MCF 10A (cell line): ENCODE measurements at regions of chr20 and their contacts with region 1.

Region 1: DNA sequence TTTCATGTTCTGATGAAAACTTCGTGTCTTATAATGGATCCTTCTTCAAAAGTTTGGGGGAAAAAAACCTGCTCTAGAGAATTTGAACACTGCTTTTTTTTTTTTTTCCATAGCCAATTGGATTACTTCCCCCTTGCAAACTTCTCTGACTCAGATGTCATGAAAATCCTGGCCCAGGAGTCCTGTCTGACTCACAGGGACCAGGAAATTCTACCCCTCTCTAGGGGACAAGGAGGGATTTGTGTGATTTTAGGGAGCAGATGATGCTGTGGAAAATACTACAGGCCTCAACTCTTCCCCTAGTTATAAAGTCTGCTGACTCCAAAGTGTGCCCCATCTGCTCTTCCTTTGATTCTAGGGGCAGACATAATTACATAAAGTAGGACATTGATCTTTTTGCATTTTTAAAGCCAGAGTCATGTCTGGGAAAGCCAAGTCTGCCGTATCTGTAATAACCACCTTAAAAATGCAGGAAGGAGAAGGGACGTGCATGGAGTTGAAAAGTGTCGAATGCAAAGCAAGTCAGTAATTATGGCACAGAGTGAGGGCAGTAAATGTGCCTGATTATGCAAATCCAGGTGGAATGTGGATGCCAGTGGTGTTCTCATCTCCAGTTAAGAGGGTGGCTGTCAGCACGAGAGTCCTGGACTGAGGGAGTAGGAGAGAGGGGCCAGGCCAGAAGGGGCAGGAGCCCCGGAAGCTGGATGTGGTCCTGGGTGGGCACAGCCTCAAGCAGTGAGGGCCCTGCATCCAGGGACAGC is 144.3 kb upstream of the SULF2 start:
- DNase-seq: peak; percentile 79
- H3K4me3 Mint-ChIP-seq: no peak overlapping the region
- H3K27ac Mint-ChIP-seq: peak overlapping the region; percentile 94
- H3K4me1 Mint-ChIP-seq: peaks cover 52% of the 10 kb centered on the region
- H3K27me3 Mint-ChIP-seq: no peaks in the 10 kb centered on the region
- CTCF ChIP-seq: no peak

Region 2: GRCh38 chr20:47809111-47809912 is 120.2 kb before region 1 on chr20:
- CTCF ChIA-PET with region 1: no interaction called
- POLR2A ChIA-PET with region 1: interaction called, 15 read pairs
- intact Hi-C with region 1: no loop called
- DNase-seq: peak; percentile 94
- H3K4me3 Mint-ChIP-seq: peak overlapping the region; percentile 54
- H3K27ac Mint-ChIP-seq: peak overlapping the region; percentile 91
- H3K4me1 Mint-ChIP-seq: peaks cover 33% of the 10 kb centered on the region
- H3K27me3 Mint-ChIP-seq: no peaks in the 10 kb centered on the region
- CTCF ChIP-seq: no peak

Region 3: GRCh38 chr20:47909116-47909456 is 20.5 kb before region 1 on chr20:
- CTCF ChIA-PET with region 1: no interaction called
- POLR2A ChIA-PET with region 1: interaction called, 44 read pairs
- intact Hi-C with region 1: no loop called
- DNase-seq: no peak
- H3K4me3 Mint-ChIP-seq: no peak overlapping the region
- H3K27ac Mint-ChIP-seq: no peak overlapping the region
- H3K4me1 Mint-ChIP-seq: peaks cover 53% of the 10 kb centered on the region
- H3K27me3 Mint-ChIP-seq: no peaks in the 10 kb centered on the region
- CTCF ChIP-seq: no peak

Region 4: DNA sequence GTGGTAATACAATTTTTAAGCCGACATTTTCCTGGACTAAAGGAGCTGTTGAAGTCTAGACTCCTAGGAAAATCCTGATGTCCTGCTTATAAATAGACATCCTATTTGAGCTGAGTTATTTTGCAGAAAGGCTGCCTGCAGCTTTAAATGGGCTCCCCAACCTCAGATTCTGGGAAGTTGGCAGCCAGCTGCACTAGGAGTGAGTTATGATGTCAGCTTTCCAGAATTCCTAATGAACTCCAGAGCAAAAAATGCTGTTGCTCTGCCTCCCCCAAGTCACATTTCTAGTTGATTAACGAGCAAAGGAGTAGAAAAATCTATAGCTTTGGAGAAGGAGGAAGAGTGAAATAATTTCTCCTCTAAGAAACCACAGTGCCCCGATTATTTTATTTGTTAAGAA is 202.0 kb after region 1 on chr20:
- CTCF ChIA-PET with region 1: interaction called, 3 read pairs
- POLR2A ChIA-PET with region 1: interaction called, 20 read pairs
- intact Hi-C with region 1: no loop called
- DNase-seq: no peak
- H3K4me3 Mint-ChIP-seq: no peak overlapping the region
- H3K27ac Mint-ChIP-seq: no peak overlapping the region
- H3K4me1 Mint-ChIP-seq: peaks cover 28% of the 10 kb centered on the region
- H3K27me3 Mint-ChIP-seq: peaks cover 3% of the 10 kb centered on the region
- CTCF ChIP-seq: no peak

Region 5: DNA sequence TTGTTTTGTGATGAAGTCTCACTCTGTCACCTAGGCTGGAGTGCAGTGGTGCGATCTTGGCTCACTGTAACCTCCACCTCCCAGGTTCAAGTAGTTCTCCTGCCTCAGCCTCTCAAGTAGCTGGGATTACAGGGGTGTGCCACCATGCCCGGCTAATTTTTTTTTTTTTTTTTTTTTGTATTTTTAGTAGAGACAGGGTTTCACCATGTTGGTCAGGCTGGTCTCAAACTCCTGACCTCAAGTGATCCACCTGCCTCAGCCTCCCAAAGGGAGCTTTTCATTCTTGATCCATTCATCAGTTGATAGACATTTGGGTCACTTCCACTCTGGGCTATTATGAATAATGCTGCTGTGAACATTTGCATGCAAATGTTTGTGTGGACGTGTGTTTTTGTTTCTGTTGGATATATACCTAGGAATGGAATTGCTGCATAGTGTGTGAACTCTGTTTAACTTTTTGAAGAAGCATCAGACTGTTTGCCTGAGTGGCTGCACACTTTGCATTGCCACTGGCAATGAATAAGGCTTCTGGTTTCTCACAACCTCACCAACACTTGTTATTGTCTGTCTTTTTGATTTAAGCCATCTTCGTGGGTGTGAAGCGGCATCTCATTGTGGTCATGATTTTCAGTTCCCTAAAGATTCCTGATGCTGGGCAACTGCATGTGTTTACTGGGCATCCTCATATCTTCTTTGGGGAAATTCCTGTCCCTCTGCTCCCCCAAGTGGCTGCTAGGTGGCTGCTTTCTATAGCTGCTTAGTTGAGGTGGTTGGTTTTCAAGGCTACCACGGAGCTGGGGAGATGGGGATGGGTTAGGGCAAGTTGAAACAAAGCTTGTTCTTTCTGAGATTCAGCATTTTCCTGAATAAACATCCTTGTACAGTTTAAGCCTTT is 259.4 kb after region 1 on chr20:
- CTCF ChIA-PET with region 1: interaction called, 9 read pairs
- POLR2A ChIA-PET with region 1: interaction called, 32 read pairs
- intact Hi-C with region 1: no loop called
- DNase-seq: peak; percentile 68
- H3K4me3 Mint-ChIP-seq: no peak overlapping the region
- H3K27ac Mint-ChIP-seq: no peak overlapping the region
- H3K4me1 Mint-ChIP-seq: peaks cover 23% of the 10 kb centered on the region
- H3K27me3 Mint-ChIP-seq: no peaks in the 10 kb centered on the region
- CTCF ChIP-seq: peak; percentile 37